Activated CD4-positive, alpha-beta T cell treated with anti-CD3 and anti-CD28 coated beads for 36 hours (primary cell): ENCODE measurements at regions of chr10 and their contacts with region 1.

Region 1: DNA sequence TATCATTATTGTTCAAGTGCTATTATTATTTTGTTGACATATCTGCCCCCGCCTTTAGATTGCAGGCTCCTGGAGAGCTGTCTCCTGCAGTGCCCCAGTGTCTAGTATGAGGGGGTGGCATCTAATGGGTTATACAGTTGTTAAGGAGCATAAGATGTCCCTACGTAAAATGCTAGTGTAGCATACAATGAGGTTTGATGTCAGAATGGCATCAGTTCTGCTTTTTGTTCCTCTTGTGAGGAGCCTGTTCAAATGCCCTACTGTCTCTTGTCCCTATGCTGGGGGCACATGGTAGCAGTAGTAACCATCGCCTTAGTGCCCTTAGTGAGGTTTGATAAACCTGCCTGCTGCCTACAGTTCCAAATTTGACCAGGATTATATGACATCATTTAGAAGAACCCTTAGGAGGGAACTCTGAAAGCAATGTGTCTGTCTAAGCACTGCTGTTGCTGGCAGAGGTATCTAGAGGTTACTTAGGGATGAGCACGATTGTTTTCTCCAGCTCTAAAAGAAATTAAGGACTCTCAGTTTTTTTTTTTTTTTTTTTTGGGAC is 9.7 kb downstream of the CREM start:
- DNase-seq: no peak
- ATAC-seq: no peak
- H3K4me3 Mint-ChIP-seq: no peak overlapping the region
- H3K27ac Mint-ChIP-seq: peak overlapping the region; percentile 37
- H3K4me1 Mint-ChIP-seq: peaks cover 37% of the 10 kb centered on the region
- H3K27me3 Mint-ChIP-seq: no peaks in the 10 kb centered on the region

Region 2: DNA sequence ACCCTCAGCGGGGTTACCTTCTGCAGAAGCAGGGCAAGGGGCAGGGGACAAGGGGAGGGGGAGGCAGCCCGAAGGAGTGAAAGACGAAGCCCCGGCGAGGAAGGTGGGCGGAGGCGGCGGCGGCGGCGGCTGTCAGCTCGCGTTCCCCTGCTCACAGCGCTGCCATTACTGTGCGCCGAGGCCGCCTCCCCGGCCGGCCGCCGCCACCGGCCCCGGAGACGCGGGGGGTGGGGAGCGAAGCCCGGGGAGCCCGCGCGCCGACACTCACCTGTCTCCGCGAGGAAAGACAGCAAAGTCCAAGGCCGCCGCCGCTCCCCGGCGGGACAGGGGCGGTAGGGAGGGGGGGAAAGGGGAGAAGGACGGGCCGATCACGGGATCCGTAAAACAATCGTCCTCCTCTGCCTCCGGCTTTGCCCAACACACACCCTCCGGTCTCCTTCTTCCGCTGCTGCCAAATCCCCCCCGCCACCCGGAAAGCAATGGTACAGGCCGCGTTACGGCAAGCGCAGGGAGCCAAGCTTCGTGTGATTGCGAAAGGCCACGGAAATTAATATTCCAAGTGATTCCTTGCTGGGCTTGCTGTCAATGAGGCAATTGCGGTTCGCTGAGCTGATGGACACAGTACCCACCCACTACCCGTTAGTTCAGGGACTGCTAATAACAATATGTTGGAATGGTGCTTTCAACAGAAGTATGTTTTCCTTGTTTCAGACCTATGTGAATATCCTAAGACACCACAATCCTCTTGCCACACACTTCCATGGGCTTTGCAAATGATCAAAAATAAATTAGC is 46.0 kb before region 1 on chr10 and contains the start of gene CUL2:
- CTCF ChIA-PET with region 1: no interaction called
- POLR2A ChIA-PET with region 1: no interaction called
- intact Hi-C with region 1: no loop called
- DNase-seq: peak; percentile 94
- ATAC-seq: peak; percentile 96
- H3K4me3 Mint-ChIP-seq: peak within 1 kb of the TSS; percentile 93
- H3K27ac Mint-ChIP-seq: peak within 1 kb of the TSS; percentile 96
- H3K4me1 Mint-ChIP-seq: peaks cover 45% of the 10 kb centered on the region
- H3K27me3 Mint-ChIP-seq: no peaks in the 10 kb centered on the region
- total RNA-seq, gene CUL2: 42.7 to 45.3 TPM

Region 3: GRCh38 chr10:35112571-35112970 is 23.8 kb before region 1 on chr10:
- CTCF ChIA-PET with region 1: no interaction called
- POLR2A ChIA-PET with region 1: no interaction called
- intact Hi-C with region 1: no loop called
- DNase-seq: no peak
- ATAC-seq: no peak
- H3K4me3 Mint-ChIP-seq: no peak overlapping the region
- H3K27ac Mint-ChIP-seq: no peak overlapping the region
- H3K4me1 Mint-ChIP-seq: no peaks in the 10 kb centered on the region
- H3K27me3 Mint-ChIP-seq: no peaks in the 10 kb centered on the region

Region 4: GRCh38 chr10:35153716-35154479 is 17.6 kb after region 1 on chr10:
- CTCF ChIA-PET with region 1: interaction called, 4 read pairs
- POLR2A ChIA-PET with region 1: no interaction called
- intact Hi-C with region 1: loop called (anchors 1 to 2 kb)
- DNase-seq: no peak
- ATAC-seq: no peak
- H3K4me3 Mint-ChIP-seq: no peak overlapping the region
- H3K27ac Mint-ChIP-seq: peak overlapping the region; percentile 23
- H3K4me1 Mint-ChIP-seq: peaks cover 49% of the 10 kb centered on the region
- H3K27me3 Mint-ChIP-seq: no peaks in the 10 kb centered on the region